Activated CD4-positive, alpha-beta T cell treated with anti-CD3 and anti-CD28 coated beads, Interleukin-2, amount 10 ng/mL, durations not matched to agents 7 days and 5 days (primary cell): ENCODE measurements at regions of chr5 and their contacts with region 1.

Region 1: DNA sequence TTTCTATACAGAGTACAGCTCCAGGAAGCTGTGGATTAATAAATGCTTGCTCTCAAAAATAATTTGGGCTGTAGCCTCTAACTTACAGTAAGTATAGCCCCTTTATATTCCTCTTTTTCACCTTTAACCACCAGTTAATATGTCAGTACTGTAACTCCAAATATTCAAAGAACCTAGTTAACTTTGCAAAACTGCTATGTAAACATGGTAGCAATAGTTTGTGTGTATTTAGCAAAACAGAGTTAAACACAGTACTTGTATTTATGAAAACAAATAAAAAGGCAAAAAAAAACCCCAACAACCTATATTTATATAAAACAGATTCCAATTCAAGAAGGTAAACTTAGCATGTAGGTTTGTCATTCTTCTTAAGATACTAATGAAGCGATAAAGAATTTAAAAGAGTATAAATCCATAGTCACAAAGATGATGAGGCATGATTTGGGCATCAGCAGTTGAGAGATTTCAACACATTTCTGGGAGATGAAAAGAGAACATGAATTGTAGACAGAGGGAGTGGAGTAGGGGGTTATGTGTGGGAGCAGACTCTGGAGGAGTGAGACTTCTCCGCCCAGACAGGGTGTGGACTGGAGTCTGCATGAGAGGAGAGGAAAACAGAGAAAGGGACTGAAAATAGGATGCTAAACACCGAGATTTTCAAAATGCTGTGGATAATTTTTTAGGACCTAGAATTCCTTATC is 47.0 kb upstream of the F2RL1 start:
- DNase-seq: no peak
- H3K4me3 Mint-ChIP-seq: no peak overlapping the region
- H3K27ac Mint-ChIP-seq: no peak overlapping the region
- H3K4me1 Mint-ChIP-seq: peaks cover 3% of the 10 kb centered on the region
- H3K27me3 Mint-ChIP-seq: no peaks in the 10 kb centered on the region

Region 2: DNA sequence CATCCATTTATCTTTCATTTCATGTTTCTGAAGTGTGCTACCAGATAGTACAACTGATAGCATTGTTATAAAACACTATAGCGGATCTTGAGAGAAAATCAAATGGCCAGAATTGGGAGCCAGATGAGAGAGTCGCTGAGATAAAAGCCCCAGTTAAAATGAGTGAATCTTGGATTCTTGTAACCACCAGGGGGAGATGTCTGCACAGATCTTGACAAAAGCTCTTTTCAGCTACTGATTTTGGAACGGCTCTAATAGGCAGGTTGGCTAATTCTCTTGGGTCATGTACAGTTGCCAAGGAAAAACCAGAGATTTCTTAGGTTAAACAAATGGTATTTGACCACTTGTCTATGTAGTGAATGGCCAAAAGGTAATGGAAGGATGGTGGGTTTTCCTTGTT is 170.4 kb before region 1 on chr5:
- CTCF ChIA-PET with region 1: interaction called, 25 read pairs
- POLR2A ChIA-PET with region 1: no interaction called
- DNase-seq: peak; percentile 46
- H3K4me3 Mint-ChIP-seq: no peak overlapping the region
- H3K27ac Mint-ChIP-seq: no peak overlapping the region
- H3K4me1 Mint-ChIP-seq: peaks cover 13% of the 10 kb centered on the region
- H3K27me3 Mint-ChIP-seq: no peaks in the 10 kb centered on the region

Region 3: GRCh38 chr5:76715736-76716455 is 56.0 kb before region 1 on chr5 and contains the start of gene F2R:
- CTCF ChIA-PET with region 1: interaction called, 15 read pairs
- POLR2A ChIA-PET with region 1: no interaction called
- DNase-seq: peak; percentile 54
- H3K4me3 Mint-ChIP-seq: peak within 1 kb of the TSS; percentile 79
- H3K27ac Mint-ChIP-seq: peak within 1 kb of the TSS; percentile 84
- H3K4me1 Mint-ChIP-seq: peaks cover 42% of the 10 kb centered on the region
- H3K27me3 Mint-ChIP-seq: peaks cover 35% of the 10 kb centered on the region
- total RNA-seq, gene F2R: 5.9 to 7.3 TPM

Region 4: GRCh38 chr5:76736679-76737556 is 34.9 kb before region 1 on chr5:
- CTCF ChIA-PET with region 1: interaction called, 18 read pairs
- POLR2A ChIA-PET with region 1: no interaction called
- DNase-seq: no peak
- H3K4me3 Mint-ChIP-seq: no peak overlapping the region
- H3K27ac Mint-ChIP-seq: no peak overlapping the region
- H3K4me1 Mint-ChIP-seq: peaks cover 47% of the 10 kb centered on the region
- H3K27me3 Mint-ChIP-seq: no peaks in the 10 kb centered on the region

Region 5: GRCh38 chr5:76782444-76782843 is 10.6 kb after region 1 on chr5:
- CTCF ChIA-PET with region 1: interaction called, 10 read pairs
- POLR2A ChIA-PET with region 1: no interaction called
- DNase-seq: no peak
- H3K4me3 Mint-ChIP-seq: no peak overlapping the region
- H3K27ac Mint-ChIP-seq: no peak overlapping the region
- H3K4me1 Mint-ChIP-seq: peaks cover 3% of the 10 kb centered on the region
- H3K27me3 Mint-ChIP-seq: peaks cover 6% of the 10 kb centered on the region

Region 6: GRCh38 chr5:76867827-76868693 is 96.2 kb after region 1 on chr5:
- CTCF ChIA-PET with region 1: no interaction called
- POLR2A ChIA-PET with region 1: no interaction called
- DNase-seq: peak; percentile 73
- H3K4me3 Mint-ChIP-seq: no peak overlapping the region
- H3K27ac Mint-ChIP-seq: no peak overlapping the region
- H3K4me1 Mint-ChIP-seq: peaks cover 4% of the 10 kb centered on the region
- H3K27me3 Mint-ChIP-seq: no peaks in the 10 kb centered on the region